ENCODE measurements at regions of chr2 and their contacts with region 1.

Region 1: GRCh38 chr2:187453078-187453641 is 5.1 kb upstream of the CALCRL start:
- DNase-seq: no peak
- H3K4me3 ChIP-seq: no peak overlapping the region
- H3K27ac ChIP-seq: no peak overlapping the region
- H3K4me1 ChIP-seq: no peaks in the 10 kb centered on the region
- H3K27me3 ChIP-seq: no peaks in the 10 kb centered on the region
- CTCF ChIP-seq: peak in 1 of 2 donors; percentile 50

Region 2: DNA sequence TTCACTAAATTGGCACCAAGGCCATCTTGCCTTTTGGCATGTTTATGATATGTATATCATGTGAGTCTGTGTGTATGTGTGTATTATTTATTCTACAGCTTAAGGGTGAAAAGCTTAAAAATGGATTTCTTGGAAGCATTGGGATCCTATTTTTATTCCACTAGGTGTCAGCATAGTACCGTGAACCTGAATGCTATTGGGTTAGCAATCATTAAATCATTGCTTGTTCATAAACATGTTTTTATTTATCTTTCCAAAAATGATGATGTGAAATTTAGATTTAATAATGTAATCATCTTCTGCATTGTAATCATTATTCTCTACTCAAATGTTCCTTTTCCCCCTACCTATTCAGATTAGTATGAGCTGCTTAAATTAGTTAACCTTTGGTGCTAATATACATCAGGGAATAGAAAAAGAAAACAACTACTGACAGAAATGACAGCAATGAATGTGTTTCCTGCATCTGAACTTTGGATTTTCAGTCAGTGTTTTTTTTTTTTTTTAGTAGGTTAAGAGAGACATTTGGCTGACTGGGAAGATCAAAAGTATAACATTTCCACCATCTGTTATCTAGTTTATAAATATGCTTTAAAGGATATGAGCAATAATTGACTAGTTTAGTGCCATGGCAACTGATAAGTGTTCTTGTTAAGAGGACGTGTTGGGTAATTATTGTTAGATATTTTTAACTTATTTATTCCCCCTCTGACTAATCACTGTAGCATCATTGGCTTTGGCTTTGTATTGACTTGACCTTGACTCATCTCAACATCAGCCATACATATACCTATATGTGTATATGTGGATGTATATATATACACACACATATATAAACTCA is 590.1 kb before region 1 on chr2:
- CTCF ChIA-PET with region 1: interaction called, 3 read pairs
- dilution Hi-C with region 1: loop called (anchors 25 kb)
- in situ Hi-C with region 1: loop called (anchors 5 to 10 kb)
- intact Hi-C with region 1: loop called (anchors 1 kb)
- DNase-seq: peak; percentile 17
- H3K4me3 ChIP-seq: no peak overlapping the region
- H3K27ac ChIP-seq: no peak overlapping the region
- H3K4me1 ChIP-seq: no peaks in the 10 kb centered on the region
- H3K27me3 ChIP-seq: no peaks in the 10 kb centered on the region
- CTCF ChIP-seq: peak; percentile 64 to 70

Region 3: GRCh38 chr2:186903216-186903615 is 549.9 kb before region 1 on chr2:
- CTCF ChIA-PET with region 1: no interaction called
- dilution Hi-C with region 1: no loop called
- in situ Hi-C with region 1: no loop called
- intact Hi-C with region 1: loop called (anchors 2 kb)
- DNase-seq: no peak
- H3K4me3 ChIP-seq: no peak overlapping the region
- H3K27ac ChIP-seq: no peak overlapping the region
- H3K4me1 ChIP-seq: no peaks in the 10 kb centered on the region
- H3K27me3 ChIP-seq: no peaks in the 10 kb centered on the region
- CTCF ChIP-seq: peak; percentile 32 to 44

Region 4: DNA sequence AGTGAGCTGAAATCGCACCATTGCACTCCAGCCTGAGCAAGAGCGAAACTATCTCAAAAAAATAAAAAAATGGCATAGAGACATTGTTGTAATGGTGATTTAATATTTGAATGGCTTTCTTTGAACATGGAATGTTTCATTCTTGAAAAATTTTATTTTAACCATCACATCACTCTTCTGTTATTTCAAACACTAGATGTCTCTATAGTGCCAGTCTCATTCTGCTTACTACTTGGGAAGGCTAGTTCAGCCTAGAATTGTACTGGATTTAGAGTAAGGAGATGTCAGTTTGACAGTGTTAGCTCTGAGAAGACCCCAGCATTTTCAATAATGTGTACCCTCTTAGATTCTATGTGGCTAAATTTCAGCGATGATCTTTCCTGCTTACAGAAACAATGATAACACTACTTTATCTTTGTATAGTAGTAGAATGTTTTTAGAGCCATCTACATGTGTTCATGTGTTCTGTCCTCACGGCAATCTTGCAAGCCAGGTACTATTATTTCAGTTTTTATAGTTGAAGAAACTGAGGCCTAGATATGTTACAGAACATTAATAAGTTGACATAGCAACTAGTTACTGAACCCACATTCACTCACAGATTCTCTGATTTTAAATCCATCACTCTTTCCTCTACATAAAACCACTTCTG is 461.3 kb before region 1 on chr2:
- CTCF ChIA-PET with region 1: interaction called, 3 read pairs
- dilution Hi-C with region 1: no loop called
- in situ Hi-C with region 1: no loop called
- intact Hi-C with region 1: loop called (anchors 5 kb)
- DNase-seq: no peak
- H3K4me3 ChIP-seq: no peak overlapping the region
- H3K27ac ChIP-seq: no peak overlapping the region
- H3K4me1 ChIP-seq: no peaks in the 10 kb centered on the region
- H3K27me3 ChIP-seq: no peaks in the 10 kb centered on the region
- CTCF ChIP-seq: peak in 1 of 2 donors; percentile 29

Region 5: GRCh38 chr2:187138265-187138664 is 314.9 kb before region 1 on chr2:
- CTCF ChIA-PET with region 1: interaction called, 4 read pairs
- dilution Hi-C with region 1: no loop called
- in situ Hi-C with region 1: loop called in 1 of 2 experiments (anchors 25 kb)
- intact Hi-C with region 1: loop called (anchors 1 kb)
- DNase-seq: peak; percentile 21
- H3K4me3 ChIP-seq: no peak overlapping the region
- H3K27ac ChIP-seq: no peak overlapping the region
- H3K4me1 ChIP-seq: no peaks in the 10 kb centered on the region
- H3K27me3 ChIP-seq: no peaks in the 10 kb centered on the region
- CTCF ChIP-seq: peak; percentile 46 to 77

Region 6: DNA sequence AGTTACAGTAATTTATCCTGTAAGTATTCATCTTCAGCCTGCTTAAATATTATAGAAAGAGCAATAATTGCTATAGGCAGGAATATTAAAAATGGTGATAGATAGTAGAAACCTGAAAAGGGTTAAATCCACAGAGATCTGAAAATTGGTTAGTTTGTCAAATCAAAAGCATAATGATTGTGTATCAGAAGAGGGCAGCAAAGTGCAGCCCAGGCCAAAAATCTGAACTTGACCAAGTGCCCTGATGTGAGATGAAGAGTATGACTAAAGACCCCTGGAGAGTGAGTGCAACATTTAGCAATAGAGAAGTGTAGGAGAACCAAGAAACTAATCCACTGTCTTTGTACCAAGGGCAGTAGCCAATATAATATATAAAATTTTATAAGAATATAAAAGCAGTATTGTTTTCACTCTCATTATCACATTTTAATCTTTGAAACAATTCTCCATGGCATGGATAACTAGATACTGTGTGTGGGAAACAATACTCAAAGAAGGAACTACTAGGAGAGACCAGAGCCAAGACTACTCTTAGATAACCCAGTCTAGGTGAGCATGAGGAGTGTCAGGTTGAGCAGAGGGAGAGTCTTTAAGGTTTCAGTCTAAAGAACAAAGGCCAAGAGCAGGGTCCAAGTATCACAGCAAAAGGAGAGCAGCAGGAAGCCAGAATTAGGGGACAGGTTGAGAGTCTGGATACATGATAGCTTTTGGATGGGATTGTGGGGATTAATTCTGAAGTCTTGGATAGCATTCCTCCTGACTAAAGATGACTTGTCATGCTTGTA is 153.8 kb before region 1 on chr2:
- CTCF ChIA-PET with region 1: no interaction called
- dilution Hi-C with region 1: no loop called
- in situ Hi-C with region 1: loop called in 1 of 2 experiments (anchors 10 kb)
- intact Hi-C with region 1: loop called (anchors 1 kb)
- DNase-seq: no peak
- H3K4me3 ChIP-seq: no peak overlapping the region
- H3K27ac ChIP-seq: no peak overlapping the region
- H3K4me1 ChIP-seq: no peaks in the 10 kb centered on the region
- H3K27me3 ChIP-seq: no peaks in the 10 kb centered on the region
- CTCF ChIP-seq: peak; percentile 20 to 59

Region 7: GRCh38 chr2:187338679-187339121 is 114.5 kb before region 1 on chr2:
- CTCF ChIA-PET with region 1: no interaction called
- dilution Hi-C with region 1: no loop called
- in situ Hi-C with region 1: no loop called
- intact Hi-C with region 1: no loop called
- DNase-seq: no peak
- H3K4me3 ChIP-seq: no peak overlapping the region
- H3K27ac ChIP-seq: no peak overlapping the region
- H3K4me1 ChIP-seq: no peaks in the 10 kb centered on the region
- H3K27me3 ChIP-seq: no peaks in the 10 kb centered on the region
- CTCF ChIP-seq: no peak

Measured in mammary epithelial cell (primary cell).